H1 (cell line): ENCODE measurements at regions of chr5 and their contacts with region 1.

Region 1: DNA sequence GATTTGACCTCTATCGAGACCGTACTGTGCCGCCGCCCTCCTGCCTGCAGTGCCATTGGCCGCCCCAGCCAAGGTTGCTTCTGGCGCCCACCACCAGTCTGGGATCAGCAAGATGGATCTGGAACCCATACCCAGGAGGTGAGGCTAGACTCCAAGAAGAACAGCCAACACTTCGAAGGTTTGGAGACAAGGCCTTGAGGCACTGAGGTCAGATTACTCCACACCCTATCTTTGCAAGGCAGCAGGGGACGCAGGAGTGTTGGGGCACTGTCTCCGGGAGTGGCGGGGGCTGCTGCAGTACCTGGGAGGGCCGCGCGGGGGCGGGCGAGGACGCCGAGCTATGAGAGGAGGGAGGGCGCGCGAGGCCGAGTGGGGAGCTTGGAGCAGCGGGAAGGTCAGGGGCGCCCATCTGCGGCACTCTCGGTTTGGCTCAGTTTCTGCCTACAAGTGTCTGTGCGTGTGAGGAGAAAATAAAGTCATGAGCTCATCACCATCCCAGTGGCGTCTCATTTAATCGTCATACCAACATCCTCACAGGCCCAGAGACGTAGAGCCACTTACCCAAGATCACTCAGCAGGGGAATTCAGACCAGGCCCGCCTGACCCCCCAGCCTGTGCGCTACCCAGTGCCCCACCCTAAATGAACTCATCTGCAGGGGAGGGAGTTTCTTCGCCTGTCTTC is 20.5 kb upstream of the PSD2 start:
- DNase-seq: peak; percentile 63 to 100
- H3K4me3 ChIP-seq: peak overlapping the region in 1 of 4 experiments; percentile 28; a peak in 1 of 8 replicates
- H3K27ac ChIP-seq: no peak overlapping the region
- H3K4me1 ChIP-seq: peaks cover 0 to 5% (median 4%) of the 10 kb centered on the region in 4 experiments; a peak in 4 of 7 replicates
- H3K27me3 ChIP-seq: peaks cover 0 to 5% (median 2%) of the 10 kb centered on the region in 4 experiments; a peak in 3 of 7 replicates
- CTCF ChIP-seq: peak in 2 of 3 experiments; percentile 96 to 97; a peak in 3 of 4 replicates
- EP300 ChIP-seq: no peak
- POLR2A ChIP-seq: no peak
- RAD21 ChIP-seq: peak; percentile 61 to 73

Region 2: DNA sequence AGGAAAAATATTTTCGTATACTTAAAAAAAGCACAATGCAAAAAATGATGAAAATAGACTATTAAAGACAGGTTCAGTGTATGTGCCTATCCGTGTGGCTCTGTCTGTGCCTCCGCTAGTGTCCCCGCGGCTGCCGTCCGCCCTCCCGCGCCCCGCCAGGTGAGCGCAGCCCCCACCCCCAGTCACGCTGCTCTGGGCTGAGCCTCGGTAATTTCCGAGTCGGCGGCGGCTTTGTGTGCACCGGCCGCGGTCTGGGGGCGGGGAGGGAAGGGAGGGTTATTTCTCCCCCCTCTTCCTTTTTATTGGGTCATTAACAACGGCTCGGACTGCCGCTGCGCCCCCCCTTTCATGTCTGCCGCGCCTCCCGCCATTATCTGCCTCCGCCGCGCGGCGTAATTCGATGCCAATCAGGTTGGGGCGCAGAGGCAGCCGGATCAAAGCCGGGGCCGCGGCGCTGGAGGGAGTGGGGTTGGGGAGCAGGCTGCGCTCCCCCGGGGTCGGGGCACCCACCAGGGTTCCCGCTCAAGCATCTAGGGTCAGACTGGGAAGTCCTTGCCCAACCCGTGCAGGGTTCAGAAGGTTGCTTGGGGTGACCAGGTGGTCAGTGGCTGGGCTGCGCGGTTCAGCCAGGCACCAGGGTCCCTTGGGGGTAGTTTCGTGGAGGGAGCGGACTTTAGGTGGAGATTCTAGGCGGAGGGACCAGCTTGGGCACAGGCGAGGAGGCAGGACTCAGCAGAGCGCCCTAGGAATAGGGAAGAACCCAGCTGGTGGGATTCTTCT is 19.0 kb before region 1 on chr5:
- CTCF ChIA-PET with region 1: interaction called, 10 read pairs
- POLR2A ChIA-PET with region 1: interaction called, 3 read pairs
- DNase-seq: peak in 1 of 2 experiments; percentile 82
- H3K4me3 ChIP-seq: peak overlapping the region; percentile 29 to 59 (median 39)
- H3K27ac ChIP-seq: no peak overlapping the region
- H3K4me1 ChIP-seq: peaks cover 4 to 12% (median 9%) of the 10 kb centered on the region in 4 experiments
- H3K27me3 ChIP-seq: peaks cover 17 to 69% (median 60%) of the 10 kb centered on the region in 4 experiments
- CTCF ChIP-seq: no peak
- EP300 ChIP-seq: no peak
- POLR2A ChIP-seq: no peak
- RAD21 ChIP-seq: no peak

Region 3: GRCh38 chr5:139795074-139796001 is 20.2 kb after region 1 on chr5 and contains the start of gene PSD2:
- CTCF ChIA-PET with region 1: interaction called, 145 read pairs
- POLR2A ChIA-PET with region 1: no interaction called
- DNase-seq: peak in 1 of 2 experiments; percentile 73
- H3K4me3 ChIP-seq: peak within 1 kb of the TSS; percentile 35 to 81 (median 50)
- H3K27ac ChIP-seq: no peak within 1 kb of the TSS
- H3K4me1 ChIP-seq: peaks cover 2 to 7% (median 2%) of the 10 kb centered on the region in 4 experiments; a peak in 3 of 7 replicates
- H3K27me3 ChIP-seq: peaks cover 41 to 74% (median 61%) of the 10 kb centered on the region in 4 experiments
- CTCF ChIP-seq: no peak
- EP300 ChIP-seq: no peak
- POLR2A ChIP-seq: no peak
- RAD21 ChIP-seq: no peak
- total RNA-seq, gene PSD2: 0.06 and 0.13 TPM in 2 replicates